ENCODE measurements at regions of chr11 and their contacts with region 1.

Region 1: DNA sequence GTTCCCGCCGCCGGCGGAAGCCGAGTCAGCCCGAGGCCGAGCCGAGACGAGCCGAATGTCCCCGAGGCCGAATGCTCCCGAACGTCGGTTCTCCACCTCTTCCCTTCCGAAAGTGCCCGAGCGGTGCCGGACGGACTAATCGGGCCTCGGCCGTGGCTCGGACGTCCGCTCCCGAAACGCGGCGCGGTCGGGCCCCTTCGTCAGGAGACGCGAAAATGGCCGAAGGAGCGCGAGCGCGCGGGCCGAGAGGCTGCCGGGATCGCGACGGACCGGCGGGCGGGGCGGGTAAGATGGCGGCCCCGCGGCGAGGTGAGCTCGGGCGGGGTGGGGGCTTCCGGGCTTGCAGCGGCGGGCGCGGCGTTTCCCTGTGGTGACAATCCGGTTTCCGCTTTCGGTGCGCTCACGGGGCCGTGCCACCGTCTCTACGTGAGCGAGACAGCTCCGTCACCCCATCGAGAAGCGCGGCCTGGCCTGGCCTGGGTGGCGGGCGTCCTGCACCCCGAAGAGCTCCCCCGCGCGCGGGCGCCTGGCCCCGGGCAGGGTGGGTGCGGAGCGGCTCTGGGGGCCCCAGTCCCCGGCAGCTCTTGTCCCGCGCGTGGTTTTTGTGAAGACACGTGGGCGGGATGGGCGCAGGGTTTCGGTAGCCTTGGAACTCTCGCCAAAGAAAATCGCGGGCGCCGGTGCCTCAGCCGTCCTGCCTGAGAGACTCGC is at the start of gene TMEM80:
- DNase-seq: peak; percentile 94 to 99 (median 97)
- ATAC-seq: peak; percentile 59
- H3K4me3 ChIP-seq: peak within 1 kb of the TSS; percentile 94
- H3K4me3 Mint-ChIP-seq: peak within 1 kb of the TSS; percentile 94
- H3K27ac ChIP-seq: peak within 1 kb of the TSS; percentile 99 to 100
- H3K27ac Mint-ChIP-seq: peak within 1 kb of the TSS; percentile 95
- H3K4me1 ChIP-seq: peaks cover 70% of the 10 kb centered on the region
- H3K4me1 Mint-ChIP-seq: peaks cover 51% of the 10 kb centered on the region
- H3K27me3 ChIP-seq: no peaks in the 10 kb centered on the region
- H3K27me3 Mint-ChIP-seq: no peaks in the 10 kb centered on the region
- CTCF ChIP-seq: no peak
- total RNA-seq, gene TMEM80: 21.0 to 22.0 TPM

Region 2: DNA sequence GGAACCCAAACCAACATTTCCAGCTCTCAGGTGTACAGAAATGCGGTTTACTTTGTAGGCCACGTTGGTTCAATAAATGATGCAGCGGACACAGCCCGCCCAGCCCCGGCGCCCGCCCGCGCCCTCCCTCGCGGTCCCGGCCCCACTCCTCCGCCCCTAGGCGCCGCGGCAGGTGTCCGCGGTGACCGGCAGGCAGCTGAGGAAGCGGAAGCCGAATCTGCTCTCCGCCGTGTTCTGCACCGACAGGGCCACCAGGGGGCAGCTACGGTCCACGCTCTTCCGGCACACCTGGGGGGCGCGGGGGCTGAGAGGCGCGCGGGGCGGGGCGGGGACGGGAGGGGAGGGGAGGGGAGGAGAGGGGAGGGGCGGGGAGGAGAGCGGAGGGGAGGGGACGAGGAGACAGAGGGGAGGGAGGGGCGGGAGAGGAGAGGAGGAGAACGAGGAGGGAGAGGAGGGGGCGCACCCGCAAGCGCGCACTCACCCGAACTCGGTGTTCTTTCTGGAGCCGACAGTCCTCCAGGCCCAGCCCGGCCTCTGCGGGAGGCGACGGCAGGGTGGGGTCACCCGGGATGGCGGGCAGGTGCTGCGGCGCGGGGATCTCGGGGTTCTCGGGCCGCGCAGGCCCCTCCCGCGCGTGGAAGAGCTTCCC is 140.7 kb before region 1 on chr11:
- CTCF ChIA-PET with region 1: interaction called, 7 read pairs
- POLR2A ChIA-PET with region 1: interaction called, 15 read pairs
- intact Hi-C with region 1: loop called in 1 of 2 experiments (anchors 10 kb)
- DNase-seq: peak; percentile 57 to 92 (median 77)
- ATAC-seq: peak; percentile 80
- H3K4me3 ChIP-seq: peak overlapping the region; percentile 48
- H3K4me3 Mint-ChIP-seq: peak overlapping the region; percentile 34
- H3K27ac ChIP-seq: no peak overlapping the region
- H3K27ac Mint-ChIP-seq: no peak overlapping the region
- H3K4me1 ChIP-seq: peaks cover 34% of the 10 kb centered on the region
- H3K4me1 Mint-ChIP-seq: peaks cover 4% of the 10 kb centered on the region
- H3K27me3 ChIP-seq: no peaks in the 10 kb centered on the region
- H3K27me3 Mint-ChIP-seq: no peaks in the 10 kb centered on the region
- CTCF ChIP-seq: peak; percentile 53

Region 3: DNA sequence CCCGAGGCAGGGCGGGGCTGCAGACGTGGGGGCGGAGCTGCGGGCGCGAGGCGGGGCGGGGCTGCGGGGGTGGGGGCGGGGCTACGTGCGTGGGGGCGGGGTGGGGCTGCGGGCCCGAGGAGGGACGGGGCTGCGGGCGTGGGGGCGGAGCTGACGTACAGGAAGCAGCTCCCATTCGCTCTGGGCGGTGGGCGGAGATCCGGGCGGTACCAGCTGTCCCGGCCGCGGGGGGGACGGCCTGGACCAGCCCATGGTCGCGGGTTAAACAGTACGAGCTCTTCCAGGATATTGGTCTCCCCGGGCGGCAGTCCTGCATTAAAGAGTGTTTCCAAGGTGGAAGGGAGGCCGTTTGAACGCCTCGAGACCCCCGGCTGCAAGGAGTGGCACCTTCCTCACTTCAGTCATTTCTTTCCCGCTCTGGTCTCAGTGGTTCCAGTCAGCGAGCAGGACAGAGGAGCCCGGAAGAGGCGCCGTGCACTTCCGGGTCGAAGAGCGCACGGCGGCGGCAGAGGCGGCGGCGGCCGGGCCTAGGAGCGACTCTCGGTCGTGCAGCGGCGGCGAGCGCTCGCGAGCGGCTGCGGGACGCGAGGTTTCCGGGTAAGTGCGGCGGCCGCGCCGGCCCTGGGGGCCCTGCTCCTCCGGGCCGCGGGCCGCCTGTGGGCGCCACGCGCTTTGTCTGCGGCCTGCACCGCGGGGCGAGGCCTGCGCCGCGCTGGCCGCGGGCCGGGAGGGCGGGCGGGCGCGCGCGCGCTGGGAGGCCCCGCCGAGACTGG is 119.5 kb before region 1 on chr11 and contains the start of gene PHRF1:
- CTCF ChIA-PET with region 1: no interaction called
- POLR2A ChIA-PET with region 1: interaction called, 17 read pairs
- intact Hi-C with region 1: no loop called
- DNase-seq: peak; percentile 91 to 98 (median 96)
- ATAC-seq: peak; percentile 90
- H3K4me3 ChIP-seq: peak within 1 kb of the TSS; percentile 87
- H3K4me3 Mint-ChIP-seq: peak within 1 kb of the TSS; percentile 95
- H3K27ac ChIP-seq: peak within 1 kb of the TSS; percentile 87 to 98
- H3K27ac Mint-ChIP-seq: peak within 1 kb of the TSS; percentile 92
- H3K4me1 ChIP-seq: peaks cover 56% of the 10 kb centered on the region
- H3K4me1 Mint-ChIP-seq: peaks cover 48% of the 10 kb centered on the region
- H3K27me3 ChIP-seq: no peaks in the 10 kb centered on the region
- H3K27me3 Mint-ChIP-seq: peaks cover 4% of the 10 kb centered on the region
- CTCF ChIP-seq: no peak
- total RNA-seq, gene PHRF1: 37.1 to 37.6 TPM

Region 4: DNA sequence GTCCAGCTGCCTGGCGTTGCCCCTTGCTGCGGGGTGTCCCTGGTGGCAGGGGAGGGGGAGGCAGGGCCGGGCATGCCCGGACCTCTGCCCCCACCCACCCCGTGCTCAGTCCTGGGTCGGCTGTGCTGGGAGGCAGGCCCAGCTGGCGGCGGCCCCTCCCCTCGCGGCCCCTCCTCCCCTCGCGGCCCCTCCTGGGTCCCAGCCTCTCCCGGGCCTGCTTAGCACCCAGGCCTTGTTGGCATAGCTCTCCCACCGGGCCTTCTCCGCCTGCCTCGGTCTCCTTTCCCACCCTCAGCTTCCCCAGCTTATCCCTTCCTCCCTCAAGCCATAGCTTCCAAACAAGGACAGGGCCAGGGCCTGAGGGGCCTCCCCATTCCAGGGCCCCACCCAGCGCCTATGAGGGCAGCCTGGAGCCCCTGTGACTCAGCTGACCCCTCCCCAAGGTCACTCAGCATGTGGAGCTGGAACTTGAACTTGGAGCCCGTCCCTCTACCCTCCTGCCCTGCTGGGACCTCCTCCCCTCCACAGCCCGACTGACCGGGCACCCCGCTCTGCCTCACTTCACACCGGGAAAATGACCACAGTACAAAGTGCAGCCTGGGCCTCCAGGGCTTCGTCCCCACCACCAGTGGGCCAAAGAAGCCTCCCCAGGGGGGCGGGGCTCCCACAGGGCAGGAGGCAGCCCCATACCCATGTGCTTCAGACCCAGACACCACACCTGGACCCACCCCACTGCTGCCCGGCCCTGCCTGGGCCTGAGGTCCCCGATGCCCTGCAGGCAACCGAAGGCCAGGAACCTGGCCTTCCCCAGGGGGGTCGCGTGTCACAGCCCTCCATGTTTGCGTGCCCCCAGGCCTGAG is 11.5 kb after region 1 on chr11:
- CTCF ChIA-PET with region 1: no interaction called
- POLR2A ChIA-PET with region 1: interaction called, 12 read pairs
- intact Hi-C with region 1: no loop called
- DNase-seq: peak in 1 of 14 experiments; percentile 20
- ATAC-seq: no peak
- H3K4me3 ChIP-seq: no peak overlapping the region
- H3K4me3 Mint-ChIP-seq: peak overlapping the region; percentile 63
- H3K27ac ChIP-seq: no peak overlapping the region
- H3K27ac Mint-ChIP-seq: no peak overlapping the region
- H3K4me1 ChIP-seq: peaks cover 34% of the 10 kb centered on the region
- H3K4me1 Mint-ChIP-seq: peaks cover 6% of the 10 kb centered on the region
- H3K27me3 ChIP-seq: peaks cover 20 to 28% of the 10 kb centered on the region in 2 experiments
- H3K27me3 Mint-ChIP-seq: peaks cover 20% of the 10 kb centered on the region
- CTCF ChIP-seq: no peak

Region 5: GRCh38 chr11:747158-748006 is 51.7 kb after region 1 on chr11 and contains the start of gene TALDO1:
- CTCF ChIA-PET with region 1: no interaction called
- POLR2A ChIA-PET with region 1: interaction called, 14 read pairs
- intact Hi-C with region 1: no loop called
- DNase-seq: peak; percentile 39 to 91 (median 75)
- ATAC-seq: peak; percentile 79
- H3K4me3 ChIP-seq: peak within 1 kb of the TSS; percentile 63
- H3K4me3 Mint-ChIP-seq: peak within 1 kb of the TSS; percentile 91
- H3K27ac ChIP-seq: peak within 1 kb of the TSS in 1 of 2 donors; percentile 46
- H3K27ac Mint-ChIP-seq: peak within 1 kb of the TSS; percentile 78
- H3K4me1 ChIP-seq: peaks cover 23% of the 10 kb centered on the region
- H3K4me1 Mint-ChIP-seq: peaks cover 18% of the 10 kb centered on the region
- H3K27me3 ChIP-seq: no peaks in the 10 kb centered on the region
- H3K27me3 Mint-ChIP-seq: no peaks in the 10 kb centered on the region
- CTCF ChIP-seq: peak; percentile 23
- total RNA-seq, gene TALDO1: 26.2 to 27.7 TPM

Region 6: DNA sequence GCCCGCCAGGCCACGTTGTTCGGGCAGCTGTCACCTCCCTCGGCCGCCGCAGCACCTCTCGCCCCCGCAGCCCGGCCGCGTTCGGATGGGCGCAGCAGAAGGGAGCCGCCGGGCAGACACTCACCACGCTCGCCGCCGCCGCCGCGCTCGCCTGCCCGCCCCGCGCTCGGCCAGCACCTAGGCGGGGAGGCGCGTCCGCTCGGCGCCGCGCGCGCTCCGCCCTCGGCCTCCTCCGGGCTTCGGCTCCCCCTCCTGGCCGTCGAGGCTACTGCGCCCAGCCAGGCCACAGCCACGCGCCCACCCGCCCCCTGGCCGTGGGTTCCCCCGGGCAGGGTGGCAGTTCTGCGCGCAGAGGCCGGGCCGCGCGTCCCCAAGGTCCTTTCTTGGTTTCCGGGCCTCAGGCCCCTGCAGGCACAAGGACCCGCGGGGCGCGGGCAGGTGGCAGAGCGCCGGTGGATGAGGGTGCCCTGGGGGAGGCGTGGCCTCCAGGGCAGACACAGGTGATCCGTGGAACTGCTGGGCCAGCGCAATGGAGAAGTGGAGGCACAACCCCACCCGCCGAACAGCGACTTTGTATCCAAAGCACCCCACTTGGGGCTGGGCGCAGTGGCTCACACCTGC is 102.5 kb after region 1 on chr11 and contains the start of gene SLC25A22:
- CTCF ChIA-PET with region 1: no interaction called
- POLR2A ChIA-PET with region 1: no interaction called
- intact Hi-C with region 1: loop called (anchors 5 kb)
- DNase-seq: peak; percentile 62 to 94 (median 81)
- ATAC-seq: peak; percentile 61
- H3K4me3 ChIP-seq: peak within 1 kb of the TSS; percentile 89
- H3K4me3 Mint-ChIP-seq: peak within 1 kb of the TSS; percentile 92
- H3K27ac ChIP-seq: peak within 1 kb of the TSS; percentile 69 to 91
- H3K27ac Mint-ChIP-seq: peak within 1 kb of the TSS; percentile 91
- H3K4me1 ChIP-seq: peaks cover 60% of the 10 kb centered on the region
- H3K4me1 Mint-ChIP-seq: peaks cover 16% of the 10 kb centered on the region
- H3K27me3 ChIP-seq: no peaks in the 10 kb centered on the region
- H3K27me3 Mint-ChIP-seq: no peaks in the 10 kb centered on the region
- CTCF ChIP-seq: peak; percentile 66
- total RNA-seq, gene SLC25A22: 9.1 to 11.1 TPM

Measured in CD4-positive, alpha-beta T cell (primary cell).